Esophagus muscularis mucosa (tissue), 4 donors: ENCODE measurements at regions of chrX and their contacts with region 1.

Region 1: DNA sequence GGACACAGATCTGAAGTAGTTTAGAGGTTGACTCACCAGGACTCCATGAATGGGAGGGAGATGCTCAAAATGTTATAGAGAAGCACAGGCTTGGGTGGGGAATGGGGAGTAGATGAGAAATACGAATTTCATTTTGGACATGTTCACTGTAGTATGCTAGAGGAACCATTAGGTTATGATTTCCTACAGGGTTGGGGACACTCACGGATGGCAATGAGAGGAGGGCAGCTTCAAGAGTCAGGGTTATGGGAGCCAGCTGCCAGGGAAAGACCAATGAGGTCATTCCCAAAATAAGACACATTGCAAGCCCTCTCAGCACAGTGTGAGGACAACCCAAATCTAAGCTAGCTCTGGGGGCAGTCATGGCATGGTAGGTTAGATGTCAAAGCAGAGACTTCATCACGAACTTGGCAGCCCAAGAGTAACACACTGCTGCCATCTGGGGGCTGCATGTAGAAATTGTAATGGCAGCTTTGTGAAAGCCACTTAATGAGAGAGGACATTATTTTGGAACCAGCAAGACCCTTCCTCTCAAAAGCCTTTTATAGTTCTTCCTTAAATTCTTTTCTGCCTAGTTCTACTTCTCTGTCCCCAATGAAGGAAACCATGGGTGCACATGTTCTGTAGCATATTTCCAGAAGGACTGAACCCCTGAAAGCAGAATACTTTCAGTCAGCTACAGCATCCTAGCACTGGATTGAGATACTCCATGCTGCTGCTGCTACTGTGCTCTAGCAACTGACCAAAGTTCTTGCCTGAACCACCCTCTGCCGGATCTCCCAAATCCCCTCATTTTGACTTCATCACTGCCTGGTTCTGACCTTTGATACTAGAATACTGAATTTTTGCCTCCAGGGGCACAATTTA is 16.2 kb upstream of the ZCCHC12 start:
- DNase-seq: no peak
- H3K4me3 ChIP-seq: no peak overlapping the region
- H3K27ac ChIP-seq: no peak overlapping the region
- H3K4me1 ChIP-seq: peaks cover 0 to 5% (median 5%) of the 10 kb centered on the region in 4 donors
- H3K27me3 ChIP-seq: no peaks in the 10 kb centered on the region
- CTCF ChIP-seq: peak; percentile 62 to 72 (median 71)
- EP300 ChIP-seq: no peak
- POLR2A ChIP-seq: no peak

Region 2: DNA sequence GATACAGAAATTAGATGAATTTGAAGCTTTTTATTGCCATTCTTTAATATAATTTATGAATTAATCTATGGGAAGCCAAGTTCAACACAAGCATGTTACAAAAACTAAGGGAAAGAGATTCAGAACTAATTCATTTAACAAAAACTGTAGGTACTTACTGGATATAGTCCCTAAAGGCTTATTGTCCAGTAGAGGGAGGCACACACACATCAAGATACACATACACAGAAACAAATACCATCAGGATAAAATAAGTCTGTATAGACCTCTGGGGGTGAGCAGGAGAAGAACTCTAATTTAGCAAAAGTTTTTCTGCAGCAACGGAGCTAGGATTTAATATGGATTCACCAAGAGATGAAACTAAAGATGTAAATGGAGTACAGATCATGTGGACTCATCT is 163.0 kb before region 1 on chrX:
- intact Hi-C with region 1: loop called (anchors 5 kb)
- DNase-seq: no peak
- H3K4me3 ChIP-seq: no peak overlapping the region
- H3K27ac ChIP-seq: no peak overlapping the region
- H3K4me1 ChIP-seq: no peaks in the 10 kb centered on the region
- H3K27me3 ChIP-seq: peaks cover 0 to 4% (median 0%) of the 10 kb centered on the region in 4 donors
- CTCF ChIP-seq: peak; percentile 26 to 45 (median 31)
- EP300 ChIP-seq: no peak
- POLR2A ChIP-seq: no peak

Region 3: GRCh38 chrX:118756101-118756500 is 51.3 kb before region 1 on chrX:
- intact Hi-C with region 1: loop called (anchors 5 kb)
- DNase-seq: no peak
- H3K4me3 ChIP-seq: no peak overlapping the region
- H3K27ac ChIP-seq: peak overlapping the region in 3 of 4 donors; percentile 15 to 48 (median 47)
- H3K4me1 ChIP-seq: peaks cover 0 to 36% (median 17%) of the 10 kb centered on the region in 4 donors
- H3K27me3 ChIP-seq: no peaks in the 10 kb centered on the region
- CTCF ChIP-seq: no peak
- EP300 ChIP-seq: no peak
- POLR2A ChIP-seq: no peak

Region 4: DNA sequence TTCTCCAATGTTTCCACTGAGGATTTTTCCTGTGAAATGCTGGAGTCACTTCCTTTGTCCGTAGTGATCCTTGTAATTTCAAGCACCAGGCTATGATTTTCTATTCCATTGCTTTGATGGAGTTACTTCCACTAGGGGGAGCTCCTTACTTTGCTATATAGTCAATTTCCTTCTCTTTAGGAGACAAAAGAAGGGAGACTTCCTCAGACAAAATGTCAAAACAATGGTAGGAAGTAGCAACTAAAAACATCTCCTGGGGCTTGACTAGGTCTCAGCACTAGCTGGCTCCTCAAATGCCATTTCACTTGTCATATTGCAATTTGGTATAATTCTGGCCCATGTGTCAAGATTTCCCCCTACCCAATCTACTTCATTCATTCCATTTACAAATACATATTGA is 40.3 kb after region 1 on chrX:
- intact Hi-C with region 1: no loop called
- DNase-seq: no peak
- H3K4me3 ChIP-seq: no peak overlapping the region
- H3K27ac ChIP-seq: no peak overlapping the region
- H3K4me1 ChIP-seq: no peaks in the 10 kb centered on the region
- H3K27me3 ChIP-seq: no peaks in the 10 kb centered on the region
- CTCF ChIP-seq: peak; percentile 52 to 66 (median 55)
- EP300 ChIP-seq: no peak
- POLR2A ChIP-seq: no peak